ENCODE measurements at regions of chr16 and their contacts with region 1.

Region 1: DNA sequence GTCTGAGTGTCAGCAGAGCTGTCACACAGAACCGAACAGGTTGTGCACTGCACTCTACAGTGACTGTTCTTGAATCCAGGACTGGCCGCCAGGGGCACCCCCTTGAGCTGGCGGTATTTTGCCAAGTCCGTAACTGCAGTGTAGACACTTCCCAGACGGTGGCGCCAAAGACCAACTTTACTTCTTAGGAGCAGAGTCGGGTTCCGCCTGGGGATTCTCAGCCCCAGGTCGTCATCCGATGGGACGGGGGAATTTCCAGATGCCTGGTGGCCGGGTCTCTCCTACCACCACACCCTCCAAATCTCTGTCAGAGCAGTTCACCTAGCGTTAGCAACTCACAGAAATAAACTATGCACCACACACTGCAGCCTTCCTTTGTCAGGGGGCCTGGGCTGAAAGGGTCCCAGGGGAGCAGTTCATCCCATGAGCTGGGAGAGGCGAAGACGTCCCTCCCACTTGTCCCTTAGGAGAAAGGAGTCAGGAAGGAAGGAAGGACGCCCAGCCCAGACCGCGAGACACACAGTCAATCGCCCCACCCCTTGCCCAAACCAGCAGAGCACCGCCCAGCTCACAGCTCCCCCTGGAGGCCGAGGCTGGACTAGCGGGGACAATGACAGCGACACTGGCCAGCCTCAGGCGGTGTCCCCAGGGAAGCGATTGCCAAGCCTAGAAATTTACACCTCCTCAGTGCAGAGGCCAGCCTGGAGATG is 7.4 kb upstream of the RIPOR1 start:
- DNase-seq: peak; percentile 95 to 98 (median 96)
- H3K4me3 ChIP-seq: peak overlapping the region in 6 of 7 experiments; percentile 65 to 90 (median 74)
- H3K27ac ChIP-seq: peak overlapping the region; percentile 86 to 93
- H3K4me1 ChIP-seq: peaks cover 0 to 53% (median 48%) of the 10 kb centered on the region in 4 experiments
- H3K27me3 ChIP-seq: no peaks in the 10 kb centered on the region

Region 2: DNA sequence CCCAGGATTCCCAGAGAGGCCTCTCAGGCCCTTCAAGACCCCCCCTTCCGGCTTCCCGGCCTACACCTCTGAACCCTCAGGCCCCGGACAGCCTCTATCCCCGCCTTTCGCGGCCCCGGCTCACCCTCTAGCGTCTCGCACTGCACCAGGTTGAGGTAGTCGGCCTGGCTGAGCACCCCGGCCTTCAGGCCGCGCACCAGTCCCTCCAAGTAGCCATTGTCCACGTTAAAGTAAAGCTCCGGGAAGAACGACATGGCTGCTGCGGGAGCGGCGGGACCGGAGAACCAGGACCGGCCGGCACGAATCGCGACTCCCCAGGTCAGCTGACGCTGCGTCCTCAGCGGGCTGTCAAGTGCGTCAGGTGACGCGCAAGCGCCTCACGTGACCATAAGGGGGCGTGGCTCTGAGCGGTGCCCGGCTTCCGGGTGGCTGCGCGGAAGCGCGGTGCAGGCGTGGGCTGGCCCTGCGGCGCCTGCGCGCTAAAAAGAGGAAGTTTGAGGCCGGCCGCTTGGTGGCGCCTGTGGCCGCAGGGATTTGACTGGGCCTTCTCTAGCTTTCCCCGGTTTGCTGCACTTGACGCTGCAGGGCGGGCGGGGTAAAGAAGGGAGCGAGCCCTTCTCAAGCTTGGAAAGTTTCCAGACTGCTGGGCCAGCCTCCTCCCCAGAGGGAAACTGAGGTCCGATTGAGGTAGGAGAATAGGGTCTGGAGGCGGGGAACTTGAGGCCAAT is 40.3 kb before region 1 on chr16 and contains the start of gene ATP6V0D1:
- CTCF ChIA-PET with region 1: interaction called, 35 read pairs
- POLR2A ChIA-PET with region 1: interaction called, 3 read pairs
- DNase-seq: peak; percentile 98 to 99 (median 99)
- H3K4me3 ChIP-seq: peak within 1 kb of the TSS; percentile 74 to 99 (median 89)
- H3K27ac ChIP-seq: peak within 1 kb of the TSS; percentile 94 to 98
- H3K4me1 ChIP-seq: peaks cover 5 to 38% (median 31%) of the 10 kb centered on the region in 4 experiments
- H3K27me3 ChIP-seq: no peaks in the 10 kb centered on the region

Region 3: GRCh38 chr16:67537270-67537635 is 16.0 kb after region 1 on chr16:
- CTCF ChIA-PET with region 1: interaction called, 60 read pairs
- POLR2A ChIA-PET with region 1: interaction called, 8 read pairs
- DNase-seq: peak in 2 of 3 donors; percentile 55 to 65
- H3K4me3 ChIP-seq: peak overlapping the region; percentile 42 to 86 (median 73)
- H3K27ac ChIP-seq: peak overlapping the region in 1 of 2 experiments; percentile 66
- H3K4me1 ChIP-seq: peaks cover 0 to 57% (median 45%) of the 10 kb centered on the region in 4 experiments
- H3K27me3 ChIP-seq: no peaks in the 10 kb centered on the region

Region 4: DNA sequence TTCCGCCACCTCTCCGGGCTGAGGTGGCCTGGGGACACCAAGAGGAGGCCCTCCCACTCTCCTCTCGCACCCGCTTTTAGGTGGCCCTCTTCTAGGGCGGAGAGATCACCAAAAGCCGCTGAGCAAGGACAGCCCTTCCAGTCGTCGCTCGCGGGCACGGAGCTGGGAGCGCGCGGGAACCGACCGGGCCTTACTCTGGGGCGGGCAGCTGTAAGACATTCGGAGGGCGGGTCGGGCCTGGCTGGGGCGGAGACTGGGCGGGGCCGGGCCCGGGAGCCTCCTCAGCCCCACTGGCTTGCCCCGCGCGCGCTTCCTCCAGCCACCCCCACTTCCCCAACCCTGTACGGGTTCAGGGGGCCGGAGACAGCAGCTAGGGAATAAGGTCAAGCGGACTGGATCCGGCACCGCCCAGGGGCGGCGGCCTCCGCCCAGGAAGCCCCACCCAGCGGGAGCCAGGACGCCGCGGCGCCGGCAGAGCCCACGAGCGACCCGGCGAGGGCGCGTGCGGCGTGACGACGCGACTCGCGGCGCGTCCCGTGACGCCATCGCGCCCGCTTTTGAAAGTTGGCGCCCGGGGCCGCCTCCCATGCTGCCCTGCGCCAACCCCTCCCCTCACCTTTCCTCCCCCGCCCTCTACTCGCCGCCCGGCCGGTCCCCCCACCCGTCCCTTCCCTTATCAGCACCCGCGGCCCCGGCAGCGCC is 40.7 kb after region 1 on chr16:
- CTCF ChIA-PET with region 1: interaction called, 25 read pairs
- POLR2A ChIA-PET with region 1: no interaction called
- DNase-seq: peak; percentile 97 to 99 (median 98)
- H3K4me3 ChIP-seq: peak overlapping the region; percentile 68 to 100 (median 88)
- H3K27ac ChIP-seq: peak overlapping the region; percentile 83 to 96
- H3K4me1 ChIP-seq: peaks cover 15 to 43% (median 35%) of the 10 kb centered on the region in 4 experiments
- H3K27me3 ChIP-seq: no peaks in the 10 kb centered on the region

Region 5: GRCh38 chr16:67613808-67614207 is 92.6 kb after region 1 on chr16:
- CTCF ChIA-PET with region 1: interaction called, 13 read pairs
- POLR2A ChIA-PET with region 1: no interaction called
- DNase-seq: peak; percentile 11 to 23 (median 22)
- H3K4me3 ChIP-seq: no peak overlapping the region
- H3K27ac ChIP-seq: no peak overlapping the region
- H3K4me1 ChIP-seq: no peaks in the 10 kb centered on the region
- H3K27me3 ChIP-seq: no peaks in the 10 kb centered on the region

Region 6: DNA sequence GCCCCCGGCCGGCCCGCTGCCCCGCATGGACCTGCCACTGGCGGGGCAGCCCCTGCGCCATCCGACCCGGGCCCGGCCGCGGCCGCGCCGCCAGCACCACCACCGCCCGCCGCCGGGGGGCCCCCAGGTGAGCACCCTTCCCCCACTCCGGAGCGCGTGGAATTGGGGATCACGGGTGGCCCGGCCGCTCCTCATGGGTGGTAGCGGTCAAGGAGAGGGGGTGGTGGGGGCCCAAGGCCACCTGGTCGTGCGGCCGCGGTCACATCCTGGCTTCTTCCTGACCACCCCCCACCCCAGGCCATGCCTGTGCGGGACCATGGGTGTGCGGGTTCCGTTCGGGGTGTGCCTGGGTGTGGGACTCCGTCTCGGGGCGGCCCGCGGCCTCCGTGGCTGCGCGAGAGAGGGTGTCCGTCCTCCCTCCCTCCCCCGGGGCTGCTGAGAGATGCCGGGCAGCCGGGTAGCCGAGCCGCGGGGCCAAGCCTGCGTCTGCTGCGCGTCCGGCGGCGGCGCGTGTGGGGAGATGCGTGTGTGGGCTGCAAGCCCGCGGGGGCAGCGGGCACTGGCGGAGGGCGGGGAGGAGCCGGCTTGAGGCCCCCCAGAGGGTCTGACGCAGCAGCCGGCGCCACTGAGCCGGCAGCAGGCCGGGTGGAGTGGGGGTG is 132.0 kb after region 1 on chr16:
- CTCF ChIA-PET with region 1: interaction called, 113 read pairs
- POLR2A ChIA-PET with region 1: no interaction called
- DNase-seq: no peak
- H3K4me3 ChIP-seq: no peak overlapping the region
- H3K27ac ChIP-seq: no peak overlapping the region
- H3K4me1 ChIP-seq: peaks cover 0 to 2% (median 0%) of the 10 kb centered on the region in 4 experiments
- H3K27me3 ChIP-seq: no peaks in the 10 kb centered on the region

Region 7: GRCh38 chr16:67667817-67668494 is 146.7 kb after region 1 on chr16:
- CTCF ChIA-PET with region 1: interaction called, 111 read pairs
- POLR2A ChIA-PET with region 1: no interaction called
- DNase-seq: peak; percentile 95 to 97 (median 97)
- H3K4me3 ChIP-seq: peak overlapping the region in 5 of 7 experiments; percentile 71 to 90 (median 81)
- H3K27ac ChIP-seq: peak overlapping the region in 1 of 2 experiments; percentile 45
- H3K4me1 ChIP-seq: peaks cover 2 to 40% (median 33%) of the 10 kb centered on the region in 4 experiments
- H3K27me3 ChIP-seq: no peaks in the 10 kb centered on the region

Measured in common myeloid progenitor, CD34-positive (primary cell).